CD4-positive, alpha-beta T cell (primary cell): ENCODE measurements at regions of chr4 and their contacts with region 1.

Region 1: DNA sequence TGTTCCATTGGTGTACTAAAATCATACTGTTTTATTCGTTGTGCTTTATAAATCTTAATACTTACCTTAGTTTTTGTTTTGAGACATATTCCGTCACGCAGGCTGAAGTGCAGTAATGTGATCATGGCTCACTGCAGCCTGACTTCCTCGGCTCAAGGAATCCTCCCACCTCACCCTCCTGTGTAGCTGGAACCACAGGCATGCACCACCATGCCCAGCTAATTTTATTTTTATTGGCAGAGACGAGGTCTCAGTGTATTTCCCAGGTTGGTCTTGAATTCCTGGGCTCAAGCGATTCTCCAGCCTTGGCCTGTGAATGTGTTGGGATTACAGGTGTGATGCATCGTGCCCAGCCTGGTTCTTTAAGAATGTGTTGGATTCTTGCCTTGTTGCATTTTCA is 24.4 kb upstream of the DCK start:
- DNase-seq: no peak
- ATAC-seq: no peak
- H3K4me3 ChIP-seq: no peak overlapping the region
- H3K4me3 Mint-ChIP-seq: no peak overlapping the region
- H3K27ac ChIP-seq: no peak overlapping the region
- H3K27ac Mint-ChIP-seq: peak overlapping the region; percentile 50
- H3K4me1 ChIP-seq: no peaks in the 10 kb centered on the region
- H3K4me1 Mint-ChIP-seq: peaks cover 31% of the 10 kb centered on the region
- H3K27me3 ChIP-seq: no peaks in the 10 kb centered on the region
- H3K27me3 Mint-ChIP-seq: no peaks in the 10 kb centered on the region
- CTCF ChIP-seq: no peak

Region 2: GRCh38 chr4:69194166-69194565 is 1774.9 kb before region 1 on chr4:
- CTCF ChIA-PET with region 1: no interaction called
- POLR2A ChIA-PET with region 1: no interaction called
- intact Hi-C with region 1: no loop called
- DNase-seq: no peak
- ATAC-seq: no peak
- H3K4me3 ChIP-seq: no peak overlapping the region
- H3K4me3 Mint-ChIP-seq: no peak overlapping the region
- H3K27ac ChIP-seq: no peak overlapping the region
- H3K27ac Mint-ChIP-seq: no peak overlapping the region
- H3K4me1 ChIP-seq: no peaks in the 10 kb centered on the region
- H3K4me1 Mint-ChIP-seq: no peaks in the 10 kb centered on the region
- H3K27me3 ChIP-seq: no peaks in the 10 kb centered on the region
- H3K27me3 Mint-ChIP-seq: no peaks in the 10 kb centered on the region
- CTCF ChIP-seq: no peak

Region 3: GRCh38 chr4:71095545-71095944 is 126.5 kb after region 1 on chr4:
- CTCF ChIA-PET with region 1: no interaction called
- POLR2A ChIA-PET with region 1: no interaction called
- intact Hi-C with region 1: loop called in 1 of 2 experiments (anchors 5 kb)
- DNase-seq: peak in 1 of 14 experiments; percentile 32
- ATAC-seq: no peak
- H3K4me3 ChIP-seq: no peak overlapping the region
- H3K4me3 Mint-ChIP-seq: no peak overlapping the region
- H3K27ac ChIP-seq: no peak overlapping the region
- H3K27ac Mint-ChIP-seq: no peak overlapping the region
- H3K4me1 ChIP-seq: peaks cover 9% of the 10 kb centered on the region
- H3K4me1 Mint-ChIP-seq: peaks cover 10% of the 10 kb centered on the region
- H3K27me3 ChIP-seq: no peaks in the 10 kb centered on the region
- H3K27me3 Mint-ChIP-seq: peaks cover 24% of the 10 kb centered on the region
- CTCF ChIP-seq: no peak